ENCODE measurements at regions of chr5 and their contacts with region 1.

Region 1: DNA sequence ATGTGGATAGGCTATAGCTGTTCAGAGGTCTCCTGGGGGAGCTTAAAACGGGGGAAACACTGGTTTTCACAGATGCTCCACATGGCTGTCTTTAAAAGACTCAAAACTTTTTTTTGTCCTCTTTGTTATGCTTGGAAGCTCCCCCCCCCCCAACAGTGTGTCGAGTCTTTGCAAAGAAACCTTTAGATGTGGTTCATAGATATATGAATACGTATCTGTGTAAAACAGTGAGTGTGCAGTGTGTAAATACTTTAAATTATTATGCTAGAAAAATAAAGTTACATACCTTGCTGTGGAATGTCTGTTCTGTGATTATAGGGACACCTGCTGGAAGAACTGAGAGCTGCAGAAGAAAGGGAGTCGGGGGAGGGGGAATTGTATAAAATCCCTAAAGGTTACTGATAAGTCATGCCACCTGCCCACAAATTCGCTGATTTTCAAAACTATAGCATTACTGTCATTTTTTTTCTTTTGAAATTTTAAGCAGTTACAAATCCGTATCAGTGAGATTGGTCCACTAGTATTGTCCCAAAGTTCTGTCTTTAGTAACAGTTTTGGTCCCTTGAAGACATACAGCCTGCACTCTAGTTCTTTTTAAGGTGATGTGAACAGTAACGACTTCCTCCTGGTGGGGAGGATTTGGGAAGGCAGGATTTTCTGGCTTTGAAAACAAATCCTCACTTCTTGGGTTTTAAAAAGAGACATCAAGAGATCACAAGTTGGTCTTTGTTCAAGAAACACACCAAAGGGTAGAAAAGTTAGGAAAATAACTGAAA is 22.9 kb downstream of the RGMB start:
- DNase-seq: peak in 13 of 14 experiments; percentile 11 to 67 (median 30)
- ATAC-seq: peak; percentile 84
- H3K4me3 ChIP-seq: no peak overlapping the region
- H3K4me3 Mint-ChIP-seq: no peak overlapping the region
- H3K27ac ChIP-seq: no peak overlapping the region
- H3K27ac Mint-ChIP-seq: no peak overlapping the region
- H3K4me1 ChIP-seq: no peaks in the 10 kb centered on the region
- H3K4me1 Mint-ChIP-seq: no peaks in the 10 kb centered on the region
- H3K27me3 ChIP-seq: no peaks in the 10 kb centered on the region
- H3K27me3 Mint-ChIP-seq: no peaks in the 10 kb centered on the region
- CTCF ChIP-seq: peak; percentile 71

Region 2: GRCh38 chr5:97231025-97231636 is 1565.3 kb before region 1 on chr5:
- CTCF ChIA-PET with region 1: interaction called, 4 read pairs
- POLR2A ChIA-PET with region 1: interaction called, 4 read pairs
- intact Hi-C with region 1: loop called (anchors 1 kb)
- DNase-seq: peak in 7 of 14 experiments; percentile 5 to 66 (median 17)
- ATAC-seq: peak; percentile 43
- H3K4me3 ChIP-seq: no peak overlapping the region
- H3K4me3 Mint-ChIP-seq: no peak overlapping the region
- H3K27ac ChIP-seq: no peak overlapping the region
- H3K27ac Mint-ChIP-seq: no peak overlapping the region
- H3K4me1 ChIP-seq: no peaks in the 10 kb centered on the region
- H3K4me1 Mint-ChIP-seq: no peaks in the 10 kb centered on the region
- H3K27me3 ChIP-seq: peaks cover 0 to 6% of the 10 kb centered on the region in 2 experiments
- H3K27me3 Mint-ChIP-seq: peaks cover 10% of the 10 kb centered on the region
- CTCF ChIP-seq: peak; percentile 73

Region 3: DNA sequence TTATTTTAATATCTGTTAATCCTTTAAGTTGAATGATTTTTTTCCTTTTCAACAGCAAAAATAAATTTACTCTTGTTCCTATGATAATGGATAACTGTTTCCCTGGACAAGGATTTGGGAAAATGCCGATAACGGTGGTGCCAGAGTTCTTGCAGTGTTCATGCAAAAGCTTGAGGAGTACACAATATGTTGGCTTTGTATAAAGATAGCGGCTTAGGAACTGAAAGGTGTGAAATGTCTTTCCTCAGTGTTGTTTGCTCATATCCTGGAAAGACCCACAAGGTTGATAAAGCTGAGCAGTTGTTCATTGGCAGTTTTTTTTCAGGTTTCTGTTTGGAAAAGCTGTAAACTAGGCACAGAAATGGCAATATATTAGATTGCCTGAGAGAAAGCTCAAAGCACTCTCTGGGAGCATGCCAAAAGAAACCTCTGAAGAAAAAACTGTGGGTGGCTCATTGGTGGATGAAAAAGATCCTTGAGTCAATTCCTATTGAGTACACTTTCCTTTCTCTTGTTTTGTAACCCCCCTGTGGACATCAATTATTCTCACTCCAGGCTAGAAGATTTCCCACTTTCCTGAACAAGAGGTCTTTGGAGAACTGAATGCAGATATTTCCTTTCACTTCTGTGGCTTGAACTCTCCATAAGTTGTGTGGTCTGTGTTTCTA is 140.1 kb before region 1 on chr5:
- CTCF ChIA-PET with region 1: no interaction called
- POLR2A ChIA-PET with region 1: no interaction called
- intact Hi-C with region 1: no loop called
- DNase-seq: no peak
- ATAC-seq: no peak
- H3K4me3 ChIP-seq: no peak overlapping the region
- H3K4me3 Mint-ChIP-seq: no peak overlapping the region
- H3K27ac ChIP-seq: no peak overlapping the region
- H3K27ac Mint-ChIP-seq: no peak overlapping the region
- H3K4me1 ChIP-seq: no peaks in the 10 kb centered on the region
- H3K4me1 Mint-ChIP-seq: no peaks in the 10 kb centered on the region
- H3K27me3 ChIP-seq: no peaks in the 10 kb centered on the region
- H3K27me3 Mint-ChIP-seq: no peaks in the 10 kb centered on the region
- CTCF ChIP-seq: no peak

Region 4: DNA sequence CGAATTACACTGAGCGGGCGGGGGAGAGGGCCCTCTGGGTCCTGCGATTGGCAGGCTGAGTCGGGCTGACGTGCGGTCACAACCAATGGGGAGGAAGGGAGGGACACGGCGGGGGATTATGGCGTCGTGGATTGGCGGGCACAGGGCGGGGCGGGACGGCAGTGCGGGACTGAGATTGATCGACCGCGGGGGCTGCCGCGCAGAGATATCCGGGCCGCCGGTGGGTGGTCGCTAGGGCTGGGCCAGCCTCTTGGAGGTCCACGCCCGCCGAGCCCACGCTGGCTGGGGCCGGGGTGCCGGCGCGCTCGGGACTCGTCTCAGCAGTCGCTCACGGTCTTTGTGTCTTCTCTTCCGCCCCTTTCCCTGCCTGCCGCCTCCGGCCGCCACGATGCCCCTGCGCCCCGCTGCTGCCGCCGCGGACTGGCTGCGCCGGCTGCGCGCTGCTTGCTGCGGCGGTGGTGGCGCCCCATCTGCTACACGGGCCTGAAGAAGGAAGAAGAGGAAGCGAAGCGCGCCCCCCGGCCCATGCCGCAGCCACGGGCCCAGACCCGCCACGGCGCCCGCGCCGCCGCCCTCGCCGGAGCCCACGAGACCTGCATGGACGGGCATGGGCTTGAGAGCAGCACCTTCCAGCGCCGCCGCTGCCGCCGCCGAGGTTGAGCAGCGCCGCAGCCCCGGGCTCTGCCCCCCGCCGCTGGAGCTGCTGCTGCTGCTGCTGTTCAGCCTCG is 22.8 kb before region 1 on chr5 and contains the start of gene RGMB:
- CTCF ChIA-PET with region 1: interaction called, 12 read pairs
- POLR2A ChIA-PET with region 1: interaction called, 7 read pairs
- intact Hi-C with region 1: loop called in 1 of 2 experiments (anchors 2 kb)
- DNase-seq: peak; percentile 79 to 94 (median 88)
- ATAC-seq: peak; percentile 85
- H3K4me3 ChIP-seq: peak within 1 kb of the TSS; percentile 74
- H3K4me3 Mint-ChIP-seq: peak within 1 kb of the TSS; percentile 99
- H3K27ac ChIP-seq: peak within 1 kb of the TSS; percentile 10 to 61
- H3K27ac Mint-ChIP-seq: peak within 1 kb of the TSS; percentile 87
- H3K4me1 ChIP-seq: peaks cover 45% of the 10 kb centered on the region
- H3K4me1 Mint-ChIP-seq: peaks cover 72% of the 10 kb centered on the region
- H3K27me3 ChIP-seq: peaks cover 0 to 12% of the 10 kb centered on the region in 2 experiments
- H3K27me3 Mint-ChIP-seq: peaks cover 14% of the 10 kb centered on the region
- CTCF ChIP-seq: no peak
- total RNA-seq, gene RGMB: 15.8 to 15.9 TPM

Region 5: GRCh38 chr5:98786191-98786853 is 10.1 kb before region 1 on chr5:
- CTCF ChIA-PET with region 1: interaction called, 10 read pairs
- POLR2A ChIA-PET with region 1: no interaction called
- intact Hi-C with region 1: no loop called
- DNase-seq: no peak
- ATAC-seq: no peak
- H3K4me3 ChIP-seq: no peak overlapping the region
- H3K4me3 Mint-ChIP-seq: no peak overlapping the region
- H3K27ac ChIP-seq: no peak overlapping the region
- H3K27ac Mint-ChIP-seq: no peak overlapping the region
- H3K4me1 ChIP-seq: no peaks in the 10 kb centered on the region
- H3K4me1 Mint-ChIP-seq: peaks cover 59% of the 10 kb centered on the region
- H3K27me3 ChIP-seq: no peaks in the 10 kb centered on the region
- H3K27me3 Mint-ChIP-seq: no peaks in the 10 kb centered on the region
- CTCF ChIP-seq: no peak